ENCODE measurements at regions of chr2 and their contacts with region 1.

Region 1: DNA sequence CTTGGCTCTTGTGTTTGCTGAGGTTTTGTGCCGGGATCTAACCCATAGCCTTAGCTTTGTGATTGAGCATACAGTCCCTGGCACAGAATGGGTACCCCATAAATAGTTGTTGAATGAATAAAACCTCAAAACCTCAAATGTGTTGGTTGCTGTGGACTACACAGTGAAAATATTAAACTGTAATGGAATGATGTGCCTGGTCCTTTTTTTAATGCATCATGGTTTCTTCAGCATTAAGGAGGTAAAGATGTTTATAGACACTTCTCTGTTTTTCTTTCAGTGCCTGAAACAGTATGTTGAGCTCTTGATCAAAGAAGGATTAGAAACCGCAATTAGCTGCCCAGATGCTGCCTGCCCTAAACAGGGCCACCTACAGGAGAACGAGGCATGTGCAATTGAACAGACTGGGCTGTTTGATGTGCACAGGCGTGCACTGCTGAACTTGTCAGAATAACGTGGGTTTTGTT is 97.0 kb downstream of the RNF144A start:
- DNase-seq: peak in 4 of 9 experiments; percentile 23 to 57 (median 45)
- ATAC-seq: peak; percentile 68
- H3K4me3 ChIP-seq: no peak overlapping the region
- H3K4me3 Mint-ChIP-seq: no peak overlapping the region
- H3K27ac ChIP-seq: no peak overlapping the region
- H3K27ac Mint-ChIP-seq: no peak overlapping the region
- H3K4me1 ChIP-seq: no peaks in the 10 kb centered on the region
- H3K4me1 Mint-ChIP-seq: peaks cover 30% of the 10 kb centered on the region
- H3K27me3 ChIP-seq: no peaks in the 10 kb centered on the region
- H3K27me3 Mint-ChIP-seq: no peaks in the 10 kb centered on the region
- CTCF ChIP-seq: peak; percentile 45

Region 2: DNA sequence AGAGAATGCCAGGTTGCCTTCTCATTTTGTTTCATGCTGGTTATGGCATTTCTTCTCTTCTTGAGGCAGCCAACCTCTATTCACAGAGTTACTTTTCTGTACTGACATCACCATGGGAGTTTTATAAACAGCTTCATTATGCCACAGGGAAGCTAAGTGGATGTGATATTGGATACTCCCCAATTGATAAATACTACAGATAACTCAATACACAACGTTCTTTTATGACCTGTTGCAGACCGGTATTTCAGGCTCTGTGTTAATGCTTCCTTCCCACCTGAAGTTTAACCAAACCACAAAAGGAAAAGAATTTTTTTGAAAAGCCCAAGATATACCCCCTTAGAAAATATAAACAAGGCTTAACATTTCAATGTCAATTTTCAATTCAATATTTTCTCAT is 1580.4 kb before region 1 on chr2:
- CTCF ChIA-PET with region 1: no interaction called
- POLR2A ChIA-PET with region 1: no interaction called
- intact Hi-C with region 1: no loop called
- DNase-seq: no peak
- ATAC-seq: no peak
- H3K4me3 ChIP-seq: no peak overlapping the region
- H3K4me3 Mint-ChIP-seq: no peak overlapping the region
- H3K27ac ChIP-seq: no peak overlapping the region
- H3K27ac Mint-ChIP-seq: no peak overlapping the region
- H3K4me1 ChIP-seq: no peaks in the 10 kb centered on the region
- H3K4me1 Mint-ChIP-seq: no peaks in the 10 kb centered on the region
- H3K27me3 ChIP-seq: no peaks in the 10 kb centered on the region
- H3K27me3 Mint-ChIP-seq: no peaks in the 10 kb centered on the region
- CTCF ChIP-seq: no peak

Region 3: DNA sequence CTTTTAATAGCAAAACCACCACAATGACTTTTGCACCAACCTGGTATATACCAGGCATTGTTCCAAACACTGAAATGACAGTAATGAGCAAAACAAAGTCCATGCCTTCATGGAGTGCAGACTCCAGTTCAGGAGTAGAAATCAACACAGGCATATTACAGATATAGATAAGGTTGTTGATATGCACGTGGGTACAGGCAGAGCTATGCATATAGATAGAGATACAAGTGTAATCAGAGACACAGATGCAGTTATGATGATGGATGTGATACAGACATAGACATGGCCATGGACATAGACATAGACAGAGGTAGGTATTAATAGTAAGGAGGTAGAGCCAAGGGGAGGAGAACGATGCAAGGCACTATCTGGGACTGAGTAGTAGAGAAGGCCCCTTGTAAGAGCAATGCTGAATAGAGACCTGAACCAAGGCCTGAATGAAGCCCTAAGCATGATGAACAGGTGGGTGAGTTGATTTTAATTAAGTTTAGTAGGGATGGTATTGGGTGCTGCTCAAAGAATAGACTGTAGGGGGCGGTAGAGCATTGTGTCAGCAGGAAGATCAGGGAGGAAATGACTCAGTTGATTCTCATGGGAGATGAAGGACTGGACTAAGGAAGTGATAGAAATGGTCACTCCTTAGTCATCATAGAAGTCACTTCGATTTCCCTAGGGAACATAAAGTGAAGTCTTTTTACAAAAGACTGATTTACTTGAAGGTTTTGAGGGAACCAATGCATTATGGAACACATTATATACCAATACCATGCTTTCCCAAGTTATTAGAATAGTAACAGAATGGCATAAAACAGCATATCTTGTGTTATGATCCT is 187.9 kb before region 1 on chr2:
- CTCF ChIA-PET with region 1: no interaction called
- POLR2A ChIA-PET with region 1: no interaction called
- intact Hi-C with region 1: loop called in 1 of 2 experiments (anchors 2 kb)
- DNase-seq: peak; percentile 12 to 73 (median 51)
- ATAC-seq: peak; percentile 80
- H3K4me3 ChIP-seq: no peak overlapping the region
- H3K4me3 Mint-ChIP-seq: no peak overlapping the region
- H3K27ac ChIP-seq: no peak overlapping the region
- H3K27ac Mint-ChIP-seq: no peak overlapping the region
- H3K4me1 ChIP-seq: no peaks in the 10 kb centered on the region
- H3K4me1 Mint-ChIP-seq: peaks cover 7% of the 10 kb centered on the region
- H3K27me3 ChIP-seq: no peaks in the 10 kb centered on the region
- H3K27me3 Mint-ChIP-seq: peaks cover 2% of the 10 kb centered on the region
- CTCF ChIP-seq: peak; percentile 89

Region 4: DNA sequence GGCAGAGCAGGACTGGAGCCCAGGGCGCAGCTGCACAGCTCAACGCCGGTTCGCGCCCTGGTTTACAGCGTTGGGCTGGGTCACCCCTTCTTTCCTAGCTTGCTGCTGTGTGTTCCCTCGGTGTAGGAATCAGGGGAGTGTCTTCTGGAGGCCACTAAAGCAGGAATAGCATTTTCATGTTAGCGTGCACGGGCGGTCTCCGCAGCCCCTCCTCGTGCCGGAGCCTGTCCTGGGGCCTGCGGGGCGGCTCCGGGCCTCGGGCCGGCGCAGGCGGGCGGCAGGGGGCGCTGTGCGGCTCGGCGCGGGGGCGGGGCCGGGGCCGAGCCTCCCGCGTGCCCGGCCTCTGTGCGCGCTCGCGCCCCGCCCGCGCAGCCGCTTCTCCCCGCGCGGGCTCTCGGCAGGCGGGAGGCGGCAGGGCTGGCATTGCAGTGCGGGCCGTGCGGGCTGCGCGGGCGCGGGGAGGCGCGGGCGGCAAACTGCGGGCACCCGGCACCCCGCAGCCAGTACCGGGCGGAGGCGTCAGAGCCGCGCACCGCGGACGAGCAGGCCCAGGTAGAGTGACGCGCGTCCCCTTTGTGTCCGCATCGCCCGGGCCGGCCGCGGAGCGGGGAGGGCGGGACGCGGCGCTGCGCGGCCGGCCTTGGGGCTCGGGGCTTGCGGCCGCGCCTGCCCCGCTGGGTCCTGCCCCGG is 97.0 kb before region 1 on chr2 and contains the start of gene RNF144A:
- CTCF ChIA-PET with region 1: interaction called, 13 read pairs
- POLR2A ChIA-PET with region 1: no interaction called
- intact Hi-C with region 1: no loop called
- DNase-seq: peak; percentile 52 to 89 (median 74)
- ATAC-seq: peak; percentile 77
- H3K4me3 ChIP-seq: peak within 1 kb of the TSS; percentile 57 to 65
- H3K4me3 Mint-ChIP-seq: peak within 1 kb of the TSS; percentile 80
- H3K27ac ChIP-seq: peak within 1 kb of the TSS in 1 of 2 experiments; percentile 28
- H3K27ac Mint-ChIP-seq: no peak within 1 kb of the TSS
- H3K4me1 ChIP-seq: peaks cover 79% of the 10 kb centered on the region
- H3K4me1 Mint-ChIP-seq: peaks cover 75% of the 10 kb centered on the region
- H3K27me3 ChIP-seq: no peaks in the 10 kb centered on the region
- H3K27me3 Mint-ChIP-seq: no peaks in the 10 kb centered on the region
- CTCF ChIP-seq: peak; percentile 63
- total RNA-seq, gene RNF144A: 25.8 to 28.8 TPM

Region 5: DNA sequence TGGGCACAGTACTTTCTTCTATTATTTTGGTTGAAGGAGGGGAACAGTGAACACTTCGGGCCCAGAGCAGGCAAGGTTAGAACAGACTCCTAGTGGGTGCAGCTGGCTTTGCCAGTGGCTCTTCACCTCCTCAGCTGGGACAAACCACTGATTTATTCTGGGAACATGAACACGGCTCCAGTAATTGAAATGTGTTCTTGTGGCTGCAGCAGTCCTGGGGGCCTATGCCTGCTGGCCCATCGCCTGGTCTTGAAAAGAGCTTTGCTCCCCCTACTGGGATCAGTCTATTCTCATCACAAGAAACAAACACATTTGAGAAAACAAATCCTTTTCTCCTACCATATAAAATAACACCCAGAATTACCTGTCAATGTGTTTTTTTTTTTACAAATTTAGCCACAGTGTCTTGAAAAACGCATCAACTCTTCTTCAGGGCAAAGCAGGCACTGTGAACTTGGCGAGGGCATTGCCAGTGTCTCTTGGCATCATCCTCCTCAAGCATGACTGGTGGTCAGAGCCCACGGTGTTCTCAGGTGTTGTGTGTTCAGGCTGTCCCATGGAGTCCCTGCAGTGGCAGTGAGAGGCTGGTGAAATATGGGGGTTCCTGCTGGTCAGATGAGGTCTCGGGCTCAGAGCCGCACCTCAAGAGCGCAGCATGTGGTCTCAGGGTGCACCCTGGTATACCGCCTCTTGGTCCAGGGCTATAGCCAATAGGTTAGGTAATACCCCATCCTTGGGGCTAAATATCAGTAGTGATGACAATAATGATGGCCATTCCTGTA is 45.7 kb before region 1 on chr2:
- CTCF ChIA-PET with region 1: no interaction called
- POLR2A ChIA-PET with region 1: no interaction called
- intact Hi-C with region 1: no loop called
- DNase-seq: peak in 2 of 9 experiments; percentile 11 to 25
- ATAC-seq: no peak
- H3K4me3 ChIP-seq: no peak overlapping the region
- H3K4me3 Mint-ChIP-seq: no peak overlapping the region
- H3K27ac ChIP-seq: no peak overlapping the region
- H3K27ac Mint-ChIP-seq: no peak overlapping the region
- H3K4me1 ChIP-seq: no peaks in the 10 kb centered on the region
- H3K4me1 Mint-ChIP-seq: peaks cover 12% of the 10 kb centered on the region
- H3K27me3 ChIP-seq: no peaks in the 10 kb centered on the region
- H3K27me3 Mint-ChIP-seq: no peaks in the 10 kb centered on the region
- CTCF ChIP-seq: no peak